Heart left ventricle (tissue), 16 donors: ENCODE measurements at regions of chr3 and their contacts with region 1.

Region 1: DNA sequence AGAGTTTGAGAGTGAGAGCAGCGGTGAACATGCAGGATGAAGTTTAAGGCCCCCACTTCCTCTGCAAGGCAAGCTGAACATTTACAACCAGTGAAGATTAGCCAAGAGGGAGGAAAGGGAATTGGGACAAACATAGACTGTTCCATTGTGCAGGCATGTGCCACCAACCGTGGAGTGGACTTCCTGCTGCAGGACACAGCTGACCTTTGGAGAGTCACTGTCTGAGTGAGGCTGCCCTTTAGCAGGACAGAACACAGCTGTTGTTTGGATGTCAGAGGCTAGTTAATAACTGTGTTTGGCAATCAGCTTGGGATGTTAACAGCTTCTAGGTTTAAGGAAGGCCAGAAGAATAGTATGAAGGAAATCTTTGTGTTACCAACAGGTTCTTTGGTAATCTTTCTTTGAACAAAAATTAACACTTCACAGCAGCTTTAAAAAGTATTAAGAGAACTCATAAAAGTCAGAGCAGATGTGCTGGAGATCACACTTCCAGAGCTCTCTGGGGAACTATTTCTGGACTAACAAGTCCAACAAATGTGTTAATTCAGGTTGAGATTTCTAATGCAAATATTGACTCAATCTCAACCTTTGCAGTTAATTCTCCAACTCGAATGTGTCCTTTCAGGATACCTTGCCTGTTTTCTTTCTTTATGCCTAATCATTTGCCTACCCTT is 31.4 kb downstream of the CTDSPL start:
- DNase-seq: peak; percentile 55 to 80 (median 71)
- ATAC-seq: peak; percentile 87 to 98 (median 93)
- H3K4me3 ChIP-seq: no peak overlapping the region
- H3K27ac ChIP-seq: peak overlapping the region in 11 of 12 donors; percentile 19 to 66 (median 53)
- H3K4me1 ChIP-seq: peaks cover 3 to 84% (median 66%) of the 10 kb centered on the region in 12 donors
- H3K27me3 ChIP-seq: no peaks in the 10 kb centered on the region
- CTCF ChIP-seq: no peak
- POLR2A ChIP-seq: no peak

Region 2: GRCh38 chr3:37862219-37862902 is 30.7 kb before region 1 on chr3:
- intact Hi-C with region 1: loop called in 1 of 10 experiments (anchors 2 kb)
- DNase-seq: peak; percentile 54 to 67 (median 64)
- ATAC-seq: peak; percentile 14 to 42 (median 36)
- H3K4me3 ChIP-seq: peak overlapping the region; percentile 43 to 89 (median 74)
- H3K27ac ChIP-seq: peak overlapping the region; percentile 64 to 93 (median 86)
- H3K4me1 ChIP-seq: peaks cover 8 to 50% (median 31%) of the 10 kb centered on the region in 12 donors
- H3K27me3 ChIP-seq: no peaks in the 10 kb centered on the region
- CTCF ChIP-seq: no peak
- POLR2A ChIP-seq: no peak

Region 3: GRCh38 chr3:37882711-37883110 is 10.4 kb before region 1 on chr3:
- intact Hi-C with region 1: loop called in 1 of 10 experiments (anchors 1 kb)
- DNase-seq: no peak
- ATAC-seq: peak in 3 of 4 donors; percentile 59 to 72 (median 70)
- H3K4me3 ChIP-seq: no peak overlapping the region
- H3K27ac ChIP-seq: peak overlapping the region in 6 of 12 donors; percentile 0 to 54 (median 34)
- H3K4me1 ChIP-seq: peaks cover 0 to 68% (median 45%) of the 10 kb centered on the region in 12 donors
- H3K27me3 ChIP-seq: no peaks in the 10 kb centered on the region
- CTCF ChIP-seq: no peak
- POLR2A ChIP-seq: no peak

Region 4: GRCh38 chr3:37986479-37987314 is 93.6 kb after region 1 on chr3:
- intact Hi-C with region 1: no loop called
- DNase-seq: peak in 1 of 5 donors; percentile 21
- ATAC-seq: peak in 1 of 4 donors; percentile 2
- H3K4me3 ChIP-seq: no peak overlapping the region
- H3K27ac ChIP-seq: no peak overlapping the region
- H3K4me1 ChIP-seq: peaks cover 0 to 12% (median 8%) of the 10 kb centered on the region in 12 donors
- H3K27me3 ChIP-seq: no peaks in the 10 kb centered on the region
- CTCF ChIP-seq: no peak
- POLR2A ChIP-seq: no peak